ENCODE measurements at regions of chr1 and their contacts with region 1.

Region 1: GRCh38 chr1:160748181-160748877 is 9.3 kb downstream of the SLAMF7 start:
- DNase-seq: no peak
- ATAC-seq: no peak
- H3K4me3 ChIP-seq: no peak overlapping the region
- H3K4me3 Mint-ChIP-seq: no peak overlapping the region
- H3K27ac ChIP-seq: no peak overlapping the region
- H3K27ac Mint-ChIP-seq: peak overlapping the region in 1 of 9 donors; percentile 35
- H3K4me1 ChIP-seq: peaks cover 20 to 83% of the 10 kb centered on the region in 2 donors
- H3K4me1 Mint-ChIP-seq: peaks cover 30 to 78% (median 39%) of the 10 kb centered on the region in 7 donors
- H3K27me3 ChIP-seq: no peaks in the 10 kb centered on the region
- H3K27me3 Mint-ChIP-seq: no peaks in the 10 kb centered on the region

Region 2: DNA sequence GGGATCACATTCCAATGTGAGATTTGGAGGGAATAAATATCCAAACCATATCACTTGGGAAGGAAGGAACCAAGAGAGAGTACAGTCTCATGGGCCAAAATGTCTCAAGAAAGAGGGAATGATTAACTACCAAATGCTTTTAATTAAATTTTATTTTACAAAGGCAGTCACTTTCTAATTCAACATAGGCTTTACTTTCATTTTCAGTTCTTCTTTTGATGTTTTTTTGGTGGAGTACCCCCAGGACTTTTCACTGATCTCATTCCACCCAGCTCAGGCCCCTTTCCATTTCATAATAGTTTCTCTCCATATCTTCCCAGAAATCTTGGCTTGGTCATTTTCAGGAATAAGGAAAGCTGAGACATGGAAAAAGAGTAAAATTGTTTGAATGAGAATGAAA is 14.4 kb before region 1 on chr1:
- CTCF ChIA-PET with region 1: interaction called, 7 read pairs
- POLR2A ChIA-PET with region 1: no interaction called
- intact Hi-C with region 1: loop called (anchors 1 to 2 kb)
- DNase-seq: peak in 2 of 9 donors; percentile 19 to 23
- ATAC-seq: no peak
- H3K4me3 ChIP-seq: peak overlapping the region; percentile 21
- H3K4me3 Mint-ChIP-seq: peak overlapping the region; percentile 1 to 77 (median 48)
- H3K27ac ChIP-seq: no peak overlapping the region
- H3K27ac Mint-ChIP-seq: peak overlapping the region; percentile 1 to 72 (median 31)
- H3K4me1 ChIP-seq: peaks cover 5 to 21% of the 10 kb centered on the region in 2 donors
- H3K4me1 Mint-ChIP-seq: peaks cover 19 to 44% (median 30%) of the 10 kb centered on the region in 7 donors
- H3K27me3 ChIP-seq: no peaks in the 10 kb centered on the region
- H3K27me3 Mint-ChIP-seq: no peaks in the 10 kb centered on the region

Measured in naive thymus-derived CD4-positive, alpha-beta T cell (primary cell).